ENCODE measurements at regions of chr4 and their contacts with region 1.

Region 1: GRCh38 chr4:119628308-119629141 is at the start of gene PDE5A:
- DNase-seq: peak; percentile 94
- total RNA-seq, gene PDE5A: 80.4 to 87.1 TPM

Region 2: GRCh38 chr4:119559044-119559647 is 69.4 kb before region 1 on chr4:
- intact Hi-C with region 1: loop called (anchors 5 to 10 kb)
- DNase-seq: no peak